Activated CD4-positive, alpha-beta memory T cell treated with anti-CD3 and anti-CD28 coated beads for 36 hours (primary cell): ENCODE measurements at regions of chr1 and their contacts with region 1.

Region 1: GRCh38 chr1:207097871-207098324 is 6.1 kb upstream of the C4BPA start:
- DNase-seq: peak; percentile 64
- H3K4me3 Mint-ChIP-seq: no peak overlapping the region
- H3K27ac Mint-ChIP-seq: peak overlapping the region; percentile 78
- H3K4me1 Mint-ChIP-seq: peaks cover 14% of the 10 kb centered on the region
- H3K27me3 Mint-ChIP-seq: peaks cover 24% of the 10 kb centered on the region

Region 2: DNA sequence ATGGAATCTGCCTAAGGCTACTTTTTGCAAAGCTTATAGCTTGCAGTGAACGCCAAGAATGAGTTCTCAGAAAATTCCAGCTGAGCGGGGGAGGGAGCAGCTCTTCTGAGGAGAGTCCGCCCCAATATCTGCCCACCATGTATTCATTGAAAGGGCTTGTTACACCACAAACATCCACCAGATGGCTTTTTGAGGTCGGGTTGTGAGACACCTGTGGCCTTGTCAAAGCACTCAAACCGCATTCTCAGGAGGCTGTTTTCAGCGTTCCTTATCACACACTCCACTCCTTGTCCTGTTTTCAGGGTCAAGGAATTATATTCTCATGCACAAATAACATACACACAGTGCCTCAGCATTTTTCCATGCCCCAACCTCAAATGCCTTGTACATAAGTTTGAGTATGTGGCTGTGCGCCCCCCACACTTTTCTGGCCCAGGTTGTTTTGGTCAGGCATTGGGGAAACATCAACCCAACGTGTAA is 13.2 kb before region 1 on chr1:
- CTCF ChIA-PET with region 1: interaction called, 11 read pairs
- POLR2A ChIA-PET with region 1: no interaction called
- intact Hi-C with region 1: no loop called
- DNase-seq: peak; percentile 60
- H3K4me3 Mint-ChIP-seq: no peak overlapping the region
- H3K27ac Mint-ChIP-seq: no peak overlapping the region
- H3K4me1 Mint-ChIP-seq: peaks cover 14% of the 10 kb centered on the region
- H3K27me3 Mint-ChIP-seq: peaks cover 23% of the 10 kb centered on the region

Region 3: DNA sequence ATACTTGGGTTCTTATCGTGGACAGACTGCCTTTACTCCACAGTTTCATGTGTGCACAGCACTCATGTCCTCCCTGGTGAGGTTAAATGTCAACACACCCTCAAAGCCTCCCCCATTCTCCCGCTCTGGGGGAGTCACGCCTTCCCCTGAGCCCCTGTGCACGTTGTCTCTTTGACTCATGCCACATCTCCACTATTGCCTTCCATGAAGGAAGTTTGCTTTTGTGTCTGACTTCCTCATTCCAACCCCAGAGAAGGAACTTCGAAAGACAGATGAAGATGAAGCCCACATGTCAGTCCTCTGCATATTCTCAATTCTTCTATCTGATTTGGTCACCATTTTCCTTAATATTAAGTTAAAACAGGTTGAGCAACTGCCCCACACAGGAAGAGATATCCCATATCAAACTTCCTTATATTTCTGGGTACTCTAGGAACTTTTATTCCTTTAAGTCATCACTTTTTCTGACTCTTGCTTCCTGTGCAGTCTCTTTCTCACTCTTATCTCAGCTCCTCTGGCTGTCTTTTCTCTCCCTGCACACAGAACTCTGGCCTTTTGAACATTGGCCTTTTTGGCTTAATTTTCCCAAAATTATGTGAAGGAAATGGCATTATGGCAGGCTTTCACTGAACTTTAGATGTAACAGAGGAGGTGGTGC is 47.6 kb after region 1 on chr1:
- CTCF ChIA-PET with region 1: no interaction called
- POLR2A ChIA-PET with region 1: no interaction called
- intact Hi-C with region 1: no loop called
- DNase-seq: no peak
- H3K4me3 Mint-ChIP-seq: no peak overlapping the region
- H3K27ac Mint-ChIP-seq: no peak overlapping the region
- H3K4me1 Mint-ChIP-seq: no peaks in the 10 kb centered on the region
- H3K27me3 Mint-ChIP-seq: peaks cover 4% of the 10 kb centered on the region

Region 4: DNA sequence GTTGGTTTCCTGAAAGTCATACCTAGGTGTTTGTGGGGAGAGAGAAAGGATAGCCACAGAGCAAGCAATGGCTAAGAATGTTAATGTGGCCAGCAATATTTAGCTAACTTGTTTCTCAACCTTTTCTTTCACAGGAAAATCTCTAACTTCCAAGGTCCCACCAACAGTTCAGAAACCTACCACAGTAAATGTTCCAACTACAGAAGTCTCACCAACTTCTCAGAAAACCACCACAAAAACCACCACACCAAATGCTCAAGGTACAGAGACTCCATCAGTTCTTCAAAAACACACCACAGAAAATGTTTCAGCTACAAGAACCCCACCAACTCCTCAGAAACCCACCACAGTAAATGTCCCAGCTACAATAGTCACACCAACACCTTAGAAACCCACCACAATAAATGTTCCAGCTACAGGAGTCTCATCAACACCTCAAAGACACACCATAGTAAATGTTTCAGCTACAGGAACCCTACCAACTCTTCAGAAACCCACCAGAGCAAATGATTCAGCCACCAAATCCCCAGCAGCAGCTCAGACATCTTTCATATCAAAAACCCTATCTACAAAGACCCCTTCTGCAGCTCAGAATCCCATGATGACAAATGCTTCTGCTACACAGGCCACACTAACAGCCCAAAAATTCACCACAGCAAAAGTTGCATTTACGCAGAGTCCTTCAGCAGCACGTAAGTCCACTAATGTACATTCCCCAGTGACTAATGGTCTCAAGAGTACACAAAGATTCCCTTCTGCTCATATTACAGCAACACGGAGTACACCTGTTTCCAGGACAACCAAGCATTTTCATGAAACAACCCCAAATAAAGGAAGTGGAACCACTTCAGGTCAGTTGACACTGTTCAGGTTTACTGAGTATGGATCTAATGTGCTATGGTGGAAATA is 238.9 kb after region 1 on chr1:
- CTCF ChIA-PET with region 1: interaction called, 3 read pairs
- POLR2A ChIA-PET with region 1: interaction called, 9 read pairs
- intact Hi-C with region 1: loop called (anchors 1 kb)
- DNase-seq: peak; percentile 39
- H3K4me3 Mint-ChIP-seq: no peak overlapping the region
- H3K27ac Mint-ChIP-seq: peak overlapping the region; percentile 86
- H3K4me1 Mint-ChIP-seq: peaks cover 58% of the 10 kb centered on the region
- H3K27me3 Mint-ChIP-seq: no peaks in the 10 kb centered on the region

Region 5: GRCh38 chr1:207389740-207390464 is 292.0 kb after region 1 on chr1:
- CTCF ChIA-PET with region 1: no interaction called
- POLR2A ChIA-PET with region 1: no interaction called
- intact Hi-C with region 1: loop called (anchors 1 kb)
- DNase-seq: no peak
- H3K4me3 Mint-ChIP-seq: no peak overlapping the region
- H3K27ac Mint-ChIP-seq: peak overlapping the region; percentile 30
- H3K4me1 Mint-ChIP-seq: peaks cover 7% of the 10 kb centered on the region
- H3K27me3 Mint-ChIP-seq: peaks cover 12% of the 10 kb centered on the region